Left cardiac atrium (tissue), 4 donors: ENCODE measurements at regions of chr12 and their contacts with region 1.

Region 1: DNA sequence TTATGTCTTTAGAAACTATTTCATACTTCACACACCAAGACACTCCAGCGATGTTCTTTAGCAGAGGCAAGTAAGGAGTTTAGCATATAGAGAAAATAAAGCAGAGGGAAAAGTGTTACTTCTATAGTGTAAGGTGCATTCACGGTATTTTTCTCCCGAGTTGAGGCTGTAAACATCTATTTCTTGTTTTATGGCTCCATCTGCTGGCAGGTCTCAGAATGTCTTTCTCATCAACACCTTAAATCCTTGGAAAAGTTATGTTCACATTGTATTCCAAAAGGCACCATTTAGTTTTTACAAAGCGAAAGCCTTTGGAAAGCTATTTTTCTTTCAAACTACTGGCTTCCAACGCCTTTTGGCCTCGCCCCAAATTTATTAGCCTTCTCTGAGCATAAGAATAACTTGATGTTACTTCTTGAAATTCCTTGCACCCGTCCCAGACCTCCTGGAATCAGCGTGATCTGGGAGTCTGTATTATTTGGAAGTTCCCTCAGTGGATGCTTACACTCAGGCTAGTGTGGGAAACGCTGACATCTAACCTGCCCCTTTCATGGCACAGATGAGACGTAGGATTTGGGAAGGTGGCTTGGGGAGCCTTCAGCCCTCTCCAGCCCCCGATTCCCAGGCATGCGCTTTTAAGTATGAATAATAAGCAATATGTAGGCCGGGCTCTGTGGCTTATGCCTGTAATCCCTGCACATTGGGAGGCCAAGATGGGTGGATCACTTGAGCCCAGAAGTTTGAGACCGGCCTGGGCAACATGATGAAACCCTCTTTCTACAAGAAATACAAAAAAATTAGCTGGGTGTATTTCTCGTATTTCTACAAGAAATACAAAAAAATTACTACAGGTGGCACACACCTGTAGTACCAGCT is 1.9 kb upstream of the PIWIL1 start:
- DNase-seq: no peak
- ATAC-seq: peak in 1 of 2 donors; percentile 27

Region 2: GRCh38 chr12:130041983-130042812 is 293.6 kb before region 1 on chr12:
- intact Hi-C with region 1: loop called (anchors 1 to 5 kb)
- DNase-seq: peak; percentile 47
- ATAC-seq: peak in 1 of 2 donors; percentile 47

Region 3: GRCh38 chr12:130086248-130086647 is 249.5 kb before region 1 on chr12:
- intact Hi-C with region 1: no loop called
- DNase-seq: no peak
- ATAC-seq: no peak

Region 4: GRCh38 chr12:130281153-130281799 is 54.5 kb before region 1 on chr12:
- intact Hi-C with region 1: loop called in 1 of 2 experiments (anchors 10 kb)
- DNase-seq: peak; percentile 27
- ATAC-seq: no peak